Dorsolateral prefrontal cortex (tissue), 120 donors: ENCODE measurements at regions of chr11 and their contacts with region 1.

Region 1: GRCh38 chr11:64652586-64653387 is 61.8 kb downstream of the SLC22A12 start:
- DNase-seq: peak in 9 of 10 donors; percentile 69 to 87 (median 84)
- H3K4me3 ChIP-seq: no peak overlapping the region
- H3K27ac ChIP-seq: peak overlapping the region in 38 of 59 donors; percentile 0 to 73 (median 40)
- H3K27me3 ChIP-seq: no peaks in the 10 kb centered on the region
- CTCF ChIP-seq: peak; percentile 66 to 95 (median 90)

Region 2: GRCh38 chr11:64317957-64318693 is 334.7 kb before region 1 on chr11 and contains the start of gene PRDX5:
- intact Hi-C with region 1: loop called in 1 of 2 experiments (anchors 10 kb)
- DNase-seq: peak; percentile 93 to 99 (median 97)
- H3K4me3 ChIP-seq: peak within 1 kb of the TSS; percentile 68 to 99 (median 93)
- H3K27ac ChIP-seq: peak within 1 kb of the TSS; percentile 93 to 100 (median 100)
- H3K27me3 ChIP-seq: no peaks in the 10 kb centered on the region
- CTCF ChIP-seq: peak; percentile 11 to 83 (median 69)
- total RNA-seq, gene PRDX5: 101 to 340 (median 208) TPM

Region 3: DNA sequence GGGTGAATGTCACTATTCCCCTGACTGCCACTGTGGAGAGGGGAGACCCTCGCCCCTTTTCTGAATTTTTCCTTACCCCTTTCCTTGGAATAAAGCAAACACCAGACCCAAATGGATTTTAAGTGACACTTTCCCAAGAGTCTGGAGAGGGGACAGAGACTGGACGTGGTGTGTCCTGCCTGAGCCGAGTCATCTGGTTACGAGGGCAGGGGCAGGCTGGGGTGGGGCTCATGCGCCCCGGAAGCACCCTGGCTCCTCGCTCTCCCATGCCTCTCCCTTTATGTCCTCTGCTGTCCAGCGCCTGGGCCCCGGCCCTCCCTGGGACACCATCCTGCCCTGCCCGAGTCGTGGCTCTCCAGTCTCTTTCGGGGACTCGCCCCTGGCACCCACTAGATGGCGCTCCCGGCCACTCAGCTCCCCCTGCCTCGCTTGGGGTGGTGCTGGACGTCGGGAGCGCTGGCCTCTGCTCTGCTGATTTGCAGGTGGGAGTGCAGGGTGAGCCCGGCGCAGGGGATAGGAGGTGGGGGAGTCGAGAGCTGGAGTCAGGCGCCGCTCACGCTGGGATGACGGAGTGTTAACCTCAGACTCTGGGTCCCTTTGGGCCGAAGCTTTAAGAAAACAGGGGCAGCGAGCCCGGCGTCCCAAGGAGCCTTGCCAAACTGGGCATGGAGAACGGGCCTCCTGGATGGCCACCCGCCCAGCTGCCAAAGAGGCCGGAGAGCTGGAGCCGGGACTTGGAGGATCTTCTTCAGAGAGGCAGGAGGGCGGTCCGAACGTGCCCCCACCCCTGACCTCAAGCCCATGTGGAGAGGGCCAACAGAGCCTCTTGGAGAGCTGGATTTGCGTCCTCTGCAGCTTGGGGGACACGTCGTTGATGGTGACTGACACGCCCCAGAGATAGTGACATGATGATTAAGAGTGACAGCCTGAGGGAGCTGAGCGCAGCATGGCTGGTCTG is 203.9 kb before region 1 on chr11:
- intact Hi-C with region 1: loop called (anchors 2 kb)
- DNase-seq: peak; percentile 69 to 93 (median 82)
- H3K4me3 ChIP-seq: peak overlapping the region; percentile 18 to 71 (median 51)
- H3K27ac ChIP-seq: peak overlapping the region in 46 of 59 donors; percentile 1 to 85 (median 60)
- H3K27me3 ChIP-seq: no peaks in the 10 kb centered on the region
- CTCF ChIP-seq: peak in 55 of 56 donors; percentile 59 to 87 (median 79)

Region 4: DNA sequence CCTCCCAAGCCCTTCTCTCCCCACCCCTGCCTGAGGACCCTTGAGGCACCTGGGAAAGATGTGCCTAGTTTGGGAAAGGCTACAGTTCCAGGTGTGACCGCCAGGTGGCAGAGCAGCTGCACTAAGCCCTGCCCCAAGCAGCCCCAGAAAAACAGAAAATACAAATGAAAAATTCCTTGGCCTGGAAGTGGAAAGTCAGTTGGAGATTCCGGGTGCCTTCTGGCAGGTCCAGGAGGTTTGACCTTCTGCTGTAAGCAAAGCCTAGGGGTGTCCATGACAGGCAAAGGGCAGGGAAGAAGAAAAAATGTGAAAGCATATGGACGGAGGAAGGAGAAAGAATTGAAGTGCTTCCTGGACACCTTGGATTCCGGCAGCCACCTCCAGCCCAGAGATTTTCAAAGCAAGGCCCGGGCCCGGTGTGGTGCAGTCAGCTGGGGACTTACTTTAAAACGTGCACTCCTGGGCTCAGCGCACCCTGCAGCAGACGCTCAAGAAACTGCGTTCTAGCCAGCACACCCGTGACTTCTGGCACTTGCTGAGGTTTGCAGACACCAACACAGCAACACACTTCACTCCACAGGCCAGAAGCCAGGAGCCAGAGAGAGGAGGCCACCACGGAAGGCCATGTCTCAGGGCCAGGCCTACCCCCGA is 99.1 kb before region 1 on chr11:
- intact Hi-C with region 1: loop called in 1 of 2 experiments (anchors 2 kb)
- DNase-seq: peak; percentile 60 to 83 (median 76)
- H3K4me3 ChIP-seq: no peak overlapping the region
- H3K27ac ChIP-seq: peak overlapping the region; percentile 11 to 88 (median 72)
- H3K27me3 ChIP-seq: no peaks in the 10 kb centered on the region
- CTCF ChIP-seq: peak; percentile 96 to 100 (median 99)

Region 5: DNA sequence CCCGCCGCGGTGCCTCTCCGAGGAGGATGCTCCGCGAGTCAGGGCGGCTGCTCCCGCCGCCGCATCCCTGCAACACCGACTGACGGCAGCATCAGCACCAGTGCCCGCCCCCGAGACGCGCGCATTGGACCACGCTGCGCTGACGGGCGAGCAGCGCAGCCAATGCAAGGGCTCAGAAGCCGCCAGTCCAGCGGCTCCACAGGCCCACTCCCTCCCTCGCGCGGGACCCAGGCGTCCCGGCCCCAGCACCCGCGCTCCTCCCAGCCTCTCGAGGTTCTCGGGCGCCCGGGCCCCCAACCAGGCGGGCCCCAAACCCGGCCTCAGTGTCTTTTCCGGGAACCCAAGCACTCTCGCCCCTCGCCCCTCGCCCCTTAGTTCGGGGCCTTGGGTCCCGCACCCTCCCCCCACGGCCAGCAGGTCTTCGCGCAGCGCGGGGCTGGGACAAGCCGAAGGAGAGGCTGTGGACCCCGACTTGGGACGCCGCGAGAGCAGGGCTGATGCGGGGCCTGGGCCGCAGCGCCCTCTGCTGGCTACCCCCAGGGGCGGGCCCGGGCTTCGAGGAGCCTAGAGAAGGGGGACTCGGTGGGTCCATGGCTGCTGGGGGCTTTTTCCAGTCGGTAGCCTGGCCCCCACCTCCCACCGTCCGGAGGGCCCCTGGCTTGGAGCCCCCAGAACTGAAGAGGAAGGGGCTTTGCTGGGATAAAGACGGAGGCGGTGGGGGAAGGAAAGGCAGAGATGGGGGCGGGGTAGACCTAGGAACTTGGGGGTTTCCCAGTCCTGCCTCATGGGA is 70.5 kb after region 1 on chr11 and contains the start of gene NRXN2:
- intact Hi-C with region 1: loop called (anchors 5 kb)
- DNase-seq: peak; percentile 91 to 98 (median 96)
- H3K4me3 ChIP-seq: peak within 1 kb of the TSS; percentile 61 to 99 (median 83)
- H3K27ac ChIP-seq: peak within 1 kb of the TSS in 58 of 59 donors; percentile 69 to 99 (median 92)
- H3K27me3 ChIP-seq: no peaks in the 10 kb centered on the region
- CTCF ChIP-seq: peak; percentile 79 to 99 (median 96)
- total RNA-seq, gene NRXN2: 116 to 339 (median 247) TPM